Activated B cell treated with CpG ODN at 0.5 μM for 24 hours (primary cell): ENCODE measurements at regions of chr7 and their contacts with region 1.

Region 1: GRCh38 chr7:149771721-149772240 is 1.6 kb downstream of the ZNF467 start:
- DNase-seq: peak; percentile 84
- ATAC-seq: peak; percentile 97
- H3K4me3 Mint-ChIP-seq: peak overlapping the region; percentile 80
- H3K27ac Mint-ChIP-seq: no peak overlapping the region
- H3K4me1 Mint-ChIP-seq: no peaks in the 10 kb centered on the region
- H3K27me3 Mint-ChIP-seq: peaks cover 8% of the 10 kb centered on the region
- CTCF ChIP-seq: no peak

Region 2: DNA sequence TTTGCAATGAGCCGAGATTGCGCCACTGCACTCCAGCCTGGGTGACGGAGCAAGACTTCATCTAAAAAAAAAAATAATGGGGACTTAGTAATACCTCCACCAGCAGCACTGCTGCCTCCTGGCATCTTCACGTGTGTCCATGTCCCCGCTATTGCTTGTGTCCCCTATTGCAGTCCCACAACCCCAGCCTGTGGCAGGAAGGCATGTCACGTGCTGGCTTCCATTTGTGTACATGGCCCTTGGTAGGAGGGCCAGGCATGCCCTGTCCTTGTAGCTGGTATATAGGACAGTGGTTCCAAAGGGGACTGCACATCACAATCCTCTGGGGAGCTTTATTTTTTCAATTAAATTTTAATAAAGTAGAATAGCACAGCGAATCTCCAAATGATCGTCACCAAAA is 504.0 kb before region 1 on chr7:
- CTCF ChIA-PET with region 1: no interaction called
- POLR2A ChIA-PET with region 1: interaction called, 14 read pairs
- intact Hi-C with region 1: no loop called
- DNase-seq: no peak
- ATAC-seq: no peak
- H3K4me3 Mint-ChIP-seq: no peak overlapping the region
- H3K27ac Mint-ChIP-seq: no peak overlapping the region
- H3K4me1 Mint-ChIP-seq: peaks cover 13% of the 10 kb centered on the region
- H3K27me3 Mint-ChIP-seq: no peaks in the 10 kb centered on the region
- CTCF ChIP-seq: no peak

Region 3: DNA sequence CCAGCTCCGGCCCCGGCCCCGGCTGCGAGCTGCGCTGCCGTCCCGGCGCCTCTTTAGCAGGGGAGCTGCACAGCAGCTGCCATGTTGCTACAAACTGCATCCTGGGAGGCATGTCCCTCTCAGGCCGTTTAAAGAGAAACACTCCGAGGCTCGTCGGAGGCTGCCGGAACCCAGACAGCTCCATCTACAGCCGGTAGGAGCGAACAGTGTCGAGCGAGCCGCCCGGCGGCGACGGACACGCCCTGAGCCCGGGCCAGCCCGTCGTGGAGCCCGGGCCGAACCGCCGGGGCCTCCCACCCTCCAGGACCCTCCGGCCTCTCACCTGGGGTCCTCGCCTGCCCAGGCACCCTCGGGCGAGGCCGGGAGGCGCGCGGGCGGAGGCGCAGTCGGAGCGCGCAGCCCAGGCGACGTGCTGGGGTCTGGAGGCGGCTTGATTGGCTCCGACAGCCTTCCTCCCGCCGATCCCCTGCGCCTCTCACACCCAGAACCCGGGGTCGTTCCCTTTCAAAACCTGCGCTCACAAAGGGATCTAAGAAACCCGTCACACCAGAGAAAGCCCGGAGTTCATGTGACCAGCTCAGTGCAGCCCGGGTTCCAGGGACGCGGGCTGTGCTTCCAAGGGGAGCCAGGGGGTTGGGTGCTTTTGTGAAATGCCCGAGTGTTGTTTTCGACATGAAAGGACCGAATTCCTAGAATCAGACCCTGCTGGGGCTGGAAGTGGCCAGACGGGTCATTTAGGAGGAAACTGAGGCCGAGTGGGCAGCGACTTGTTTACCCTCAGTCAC is 311.1 kb before region 1 on chr7 and contains the start of gene ZNF777:
- CTCF ChIA-PET with region 1: no interaction called
- POLR2A ChIA-PET with region 1: no interaction called
- intact Hi-C with region 1: loop called (anchors 5 kb)
- DNase-seq: peak; percentile 69
- ATAC-seq: peak; percentile 97
- H3K4me3 Mint-ChIP-seq: peak within 1 kb of the TSS; percentile 87
- H3K27ac Mint-ChIP-seq: peak within 1 kb of the TSS; percentile 65
- H3K4me1 Mint-ChIP-seq: peaks cover 24% of the 10 kb centered on the region
- H3K27me3 Mint-ChIP-seq: peaks cover 9% of the 10 kb centered on the region
- CTCF ChIP-seq: no peak
- total RNA-seq, gene ZNF777: 14.0 and 16.2 TPM in 2 replicates

Region 4: DNA sequence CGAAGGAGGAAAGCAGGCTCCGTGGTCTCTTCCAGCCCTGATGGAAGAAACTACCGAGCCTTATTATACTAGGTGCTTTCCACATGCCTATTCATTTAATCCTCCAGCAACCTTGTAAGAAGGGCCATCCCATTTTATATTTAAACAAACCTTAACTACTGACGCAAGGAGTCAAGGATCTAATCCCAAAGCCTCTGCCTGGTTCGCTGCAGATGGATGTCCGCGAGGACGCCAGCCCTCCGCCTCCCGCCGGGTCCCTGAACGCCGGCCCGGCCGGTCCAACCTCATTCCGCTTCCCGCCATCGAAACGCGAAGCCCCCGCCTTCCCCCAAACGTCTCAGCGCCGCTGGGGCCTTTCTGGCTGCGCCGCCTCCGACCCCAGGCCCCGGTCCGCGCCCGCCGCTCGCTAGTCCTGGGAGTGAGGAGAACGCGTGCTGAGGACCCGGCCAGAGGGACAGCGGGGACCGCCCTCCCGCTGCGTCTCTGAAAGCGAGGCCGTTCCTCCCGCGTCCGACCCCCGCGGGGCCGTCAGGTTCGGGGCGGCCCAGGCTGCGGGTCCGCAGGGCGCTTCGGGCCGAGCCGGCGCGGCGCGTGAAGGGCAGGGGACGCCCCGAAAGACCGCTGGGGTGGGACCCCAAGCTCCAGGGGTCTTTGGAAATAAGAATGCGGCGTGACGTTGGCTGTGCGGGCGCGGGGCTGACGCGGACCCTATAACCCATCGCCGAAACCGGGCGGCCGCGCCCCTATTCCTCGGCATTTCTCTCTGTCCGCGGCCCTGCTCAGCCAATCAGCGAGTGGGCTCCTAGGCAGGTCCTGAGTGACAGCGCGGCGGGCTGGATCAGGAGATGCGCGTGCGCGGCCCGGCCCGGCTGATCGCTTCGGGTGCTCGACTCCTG is 101.5 kb after region 1 on chr7 and contains the start of gene ATP6V0E2:
- CTCF ChIA-PET with region 1: no interaction called
- POLR2A ChIA-PET with region 1: no interaction called
- intact Hi-C with region 1: loop called (anchors 1 kb)
- DNase-seq: peak; percentile 86
- ATAC-seq: peak; percentile 95
- H3K4me3 Mint-ChIP-seq: peak within 1 kb of the TSS; percentile 86
- H3K27ac Mint-ChIP-seq: peak within 1 kb of the TSS; percentile 53
- H3K4me1 Mint-ChIP-seq: peaks cover 42% of the 10 kb centered on the region
- H3K27me3 Mint-ChIP-seq: no peaks in the 10 kb centered on the region
- CTCF ChIP-seq: no peak
- total RNA-seq, gene ATP6V0E2: 9.1 and 10.4 TPM in 2 replicates

Region 5: DNA sequence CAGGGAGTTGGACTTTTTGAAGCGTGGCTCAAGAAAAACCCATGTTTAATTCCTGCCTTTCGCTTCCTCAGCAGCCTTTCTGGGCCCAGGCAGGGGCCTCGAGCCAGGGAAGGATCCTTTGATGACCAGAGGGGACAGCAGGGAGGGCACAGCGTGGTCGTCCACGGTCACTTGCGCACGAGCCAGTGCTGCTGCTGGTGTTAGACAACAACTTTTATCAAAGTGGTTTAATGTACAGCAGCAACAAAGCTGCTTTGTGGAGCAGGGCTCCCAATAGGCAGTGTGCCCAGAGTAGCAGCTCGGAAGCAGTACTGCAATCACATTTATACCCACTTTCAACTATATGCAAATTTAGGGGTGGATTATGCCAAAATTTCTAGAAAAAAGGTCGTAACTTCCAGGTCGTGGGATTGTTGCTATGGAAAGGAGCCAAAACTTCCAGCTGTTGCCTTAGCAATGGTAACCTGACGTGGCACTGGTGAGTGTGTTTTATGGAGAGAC is 950.7 kb after region 1 on chr7:
- CTCF ChIA-PET with region 1: no interaction called
- POLR2A ChIA-PET with region 1: no interaction called
- intact Hi-C with region 1: no loop called
- DNase-seq: no peak
- ATAC-seq: no peak
- H3K4me3 Mint-ChIP-seq: no peak overlapping the region
- H3K27ac Mint-ChIP-seq: no peak overlapping the region
- H3K4me1 Mint-ChIP-seq: no peaks in the 10 kb centered on the region
- H3K27me3 Mint-ChIP-seq: peaks cover 3% of the 10 kb centered on the region
- CTCF ChIP-seq: no peak

Region 6: GRCh38 chr7:151028131-151028947 is 1256.6 kb after region 1 on chr7 and contains the start of gene ABCB8:
- CTCF ChIA-PET with region 1: no interaction called
- POLR2A ChIA-PET with region 1: no interaction called
- intact Hi-C with region 1: loop called (anchors 2 kb)
- DNase-seq: peak; percentile 94
- ATAC-seq: peak; percentile 93
- H3K4me3 Mint-ChIP-seq: peak within 1 kb of the TSS; percentile 96
- H3K27ac Mint-ChIP-seq: peak within 1 kb of the TSS; percentile 97
- H3K4me1 Mint-ChIP-seq: peaks cover 22% of the 10 kb centered on the region
- H3K27me3 Mint-ChIP-seq: peaks cover 9% of the 10 kb centered on the region
- CTCF ChIP-seq: no peak
- total RNA-seq, gene ABCB8: 38.9 and 46.5 TPM in 2 replicates

Region 7: DNA sequence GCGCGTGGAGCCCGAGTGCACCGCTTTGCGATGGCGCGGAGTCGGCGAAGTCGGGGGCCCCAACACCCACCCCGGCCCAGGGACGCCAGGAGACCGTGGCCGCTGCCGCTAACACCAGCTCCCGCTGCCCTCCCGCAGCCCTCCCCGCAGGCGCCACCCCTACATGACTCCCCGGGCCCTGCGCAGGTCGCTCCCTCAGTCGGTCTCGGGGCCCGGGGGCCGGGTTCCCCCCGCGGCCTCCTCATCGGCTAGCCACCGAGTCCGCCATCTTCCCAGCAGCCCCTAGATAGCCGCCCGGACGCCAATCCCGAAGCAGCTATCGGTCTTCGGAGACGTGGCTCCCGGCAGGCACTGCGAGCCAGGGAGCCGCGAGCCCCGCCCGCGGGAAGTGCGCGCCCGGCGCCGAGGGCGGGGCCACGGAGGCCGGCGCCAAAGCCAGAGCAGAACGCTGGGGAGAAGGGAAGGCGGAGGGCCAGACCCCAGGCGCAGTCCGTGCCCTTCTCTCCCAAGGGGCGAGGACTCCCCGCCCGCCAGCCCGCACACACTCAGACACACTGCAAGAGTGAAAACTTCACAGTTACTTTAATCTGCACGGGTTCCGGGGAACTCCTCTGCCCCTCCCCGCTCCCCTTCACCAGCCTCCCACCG is 1308.9 kb after region 1 on chr7 and contains the start of gene FASTK:
- CTCF ChIA-PET with region 1: no interaction called
- POLR2A ChIA-PET with region 1: no interaction called
- intact Hi-C with region 1: loop called (anchors 2 kb)
- DNase-seq: peak; percentile 81
- ATAC-seq: peak; percentile 83
- H3K4me3 Mint-ChIP-seq: peak within 1 kb of the TSS; percentile 91
- H3K27ac Mint-ChIP-seq: peak within 1 kb of the TSS; percentile 70
- H3K4me1 Mint-ChIP-seq: peaks cover 49% of the 10 kb centered on the region
- H3K27me3 Mint-ChIP-seq: peaks cover 8% of the 10 kb centered on the region
- CTCF ChIP-seq: no peak
- total RNA-seq, gene FASTK: 97.6 and 103 TPM in 2 replicates

Region 8: GRCh38 chr7:151226875-151227782 is 1455.3 kb after region 1 on chr7 and contains the start of gene ABCF2:
- CTCF ChIA-PET with region 1: no interaction called
- POLR2A ChIA-PET with region 1: no interaction called
- intact Hi-C with region 1: loop called (anchors 5 kb)
- DNase-seq: peak; percentile 97
- ATAC-seq: peak; percentile 99
- H3K4me3 Mint-ChIP-seq: peak within 1 kb of the TSS; percentile 99
- H3K27ac Mint-ChIP-seq: peak within 1 kb of the TSS; percentile 91
- H3K4me1 Mint-ChIP-seq: peaks cover 41% of the 10 kb centered on the region
- H3K27me3 Mint-ChIP-seq: no peaks in the 10 kb centered on the region
- CTCF ChIP-seq: no peak
- total RNA-seq, gene ABCF2: 47.3 and 52.4 TPM in 2 replicates